Right ventricle myocardium inferior (tissue), 1 donor: ENCODE measurements at regions of chr6 and their contacts with region 1.

Region 1: GRCh38 chr6:46410334-46410953 is 80.8 kb downstream of the RCAN2 start:
- DNase-seq: no peak
- ATAC-seq: no peak

Region 2: GRCh38 chr6:46090115-46091079 is 320.0 kb before region 1 on chr6:
- intact Hi-C with region 1: loop called (anchors 1 kb)
- DNase-seq: peak; percentile 69
- ATAC-seq: no peak

Region 3: DNA sequence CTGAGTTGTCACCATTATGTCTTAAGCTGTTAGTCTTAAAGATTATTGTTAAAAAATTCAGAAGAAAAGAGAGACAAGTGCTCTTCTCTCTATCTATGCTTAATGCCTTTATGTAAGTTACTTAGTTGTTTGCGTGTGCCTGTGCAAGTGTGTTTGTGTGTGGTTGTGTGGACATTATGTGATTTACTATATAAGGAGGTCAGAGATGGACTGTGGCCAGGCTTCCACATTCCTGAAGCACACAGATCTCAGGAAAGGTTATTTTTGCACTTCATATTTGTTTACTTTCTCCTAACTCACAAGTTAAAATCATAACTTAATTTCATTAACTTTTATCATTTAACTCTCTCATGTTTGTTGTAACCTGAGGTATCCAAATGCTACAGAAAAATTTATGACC is 266.2 kb before region 1 on chr6:
- intact Hi-C with region 1: no loop called
- DNase-seq: no peak
- ATAC-seq: no peak

Region 4: DNA sequence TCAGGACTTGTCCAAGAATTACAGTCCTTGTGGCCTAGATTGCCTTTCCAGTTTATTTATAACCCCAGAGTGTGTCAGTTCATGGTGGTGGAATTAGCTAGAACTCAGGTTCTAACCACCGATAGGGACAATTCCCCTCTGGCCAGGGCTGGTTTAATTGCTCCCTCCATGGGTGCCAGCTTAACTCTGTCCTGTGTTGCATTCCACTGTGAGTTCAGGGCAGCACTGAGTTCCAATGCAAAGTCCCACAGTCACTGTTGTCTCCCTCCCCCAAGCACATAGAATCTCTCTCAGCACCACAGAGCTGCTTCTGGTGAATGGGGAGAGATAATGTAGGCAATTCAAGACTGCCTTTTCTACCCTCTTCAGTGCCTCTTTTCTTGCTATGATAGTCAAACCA is 981.8 kb after region 1 on chr6:
- intact Hi-C with region 1: no loop called
- DNase-seq: no peak
- ATAC-seq: no peak